ENCODE measurements at regions of chr18 and their contacts with region 1.

Region 1: GRCh38 chr18:28189400-28190239 is 12.7 kb upstream of the CDH2 start:
- DNase-seq: peak; percentile 54
- ATAC-seq: peak; percentile 86
- H3K4me3 ChIP-seq: no peak overlapping the region
- H3K27ac ChIP-seq: no peak overlapping the region
- H3K4me1 ChIP-seq: peaks cover 23% of the 10 kb centered on the region
- H3K27me3 ChIP-seq: no peaks in the 10 kb centered on the region
- CTCF ChIP-seq: peak; percentile 82
- EP300 ChIP-seq: no peak
- POLR2A ChIP-seq: no peak
- RAD21 ChIP-seq: peak; percentile 61

Region 2: DNA sequence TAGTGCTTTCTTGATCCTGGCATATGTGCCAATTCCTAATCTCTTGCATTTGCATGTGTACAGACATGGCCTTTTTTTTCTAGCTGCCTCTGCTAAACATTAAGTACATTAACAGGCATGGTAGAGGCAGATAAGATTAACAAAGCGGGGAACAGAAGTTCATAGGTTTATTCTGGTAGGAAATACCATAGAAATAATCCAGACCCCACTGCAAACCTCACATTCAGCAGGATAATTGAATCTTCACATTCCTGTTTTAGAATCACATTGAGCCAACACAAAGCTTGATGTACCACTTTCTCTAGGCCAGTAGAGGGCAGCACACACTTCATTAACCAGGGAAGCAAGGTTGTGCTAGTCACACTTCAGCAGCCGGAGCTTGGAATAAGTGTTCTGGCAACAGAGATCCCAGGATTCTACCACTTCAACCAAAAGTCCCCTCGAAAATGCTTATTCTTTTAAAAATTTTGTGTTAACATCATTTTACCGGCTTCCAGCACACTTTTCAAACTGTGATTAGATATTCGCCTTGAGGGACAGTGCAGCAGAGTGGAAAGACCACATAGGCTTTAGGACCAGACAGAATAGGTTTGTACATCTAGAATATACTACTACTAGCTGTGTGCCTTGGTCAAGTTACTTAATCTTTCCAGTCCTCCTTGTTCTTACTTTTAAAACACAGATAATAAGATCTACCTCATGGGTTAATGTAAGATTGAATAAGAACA is 584.3 kb before region 1 on chr18:
- CTCF ChIA-PET with region 1: interaction called, 3 read pairs
- POLR2A ChIA-PET with region 1: no interaction called
- in situ Hi-C with region 1: loop called (anchors 25 kb)
- intact Hi-C with region 1: loop called (anchors 2 kb)
- DNase-seq: peak; percentile 53
- ATAC-seq: peak; percentile 92
- H3K4me3 ChIP-seq: no peak overlapping the region
- H3K27ac ChIP-seq: no peak overlapping the region
- H3K4me1 ChIP-seq: no peaks in the 10 kb centered on the region
- H3K27me3 ChIP-seq: no peaks in the 10 kb centered on the region
- CTCF ChIP-seq: peak; percentile 85
- EP300 ChIP-seq: no peak
- POLR2A ChIP-seq: no peak
- RAD21 ChIP-seq: 0 out of 2 replicates have a peak, but pooled peaks have one; percentile 21

Region 3: DNA sequence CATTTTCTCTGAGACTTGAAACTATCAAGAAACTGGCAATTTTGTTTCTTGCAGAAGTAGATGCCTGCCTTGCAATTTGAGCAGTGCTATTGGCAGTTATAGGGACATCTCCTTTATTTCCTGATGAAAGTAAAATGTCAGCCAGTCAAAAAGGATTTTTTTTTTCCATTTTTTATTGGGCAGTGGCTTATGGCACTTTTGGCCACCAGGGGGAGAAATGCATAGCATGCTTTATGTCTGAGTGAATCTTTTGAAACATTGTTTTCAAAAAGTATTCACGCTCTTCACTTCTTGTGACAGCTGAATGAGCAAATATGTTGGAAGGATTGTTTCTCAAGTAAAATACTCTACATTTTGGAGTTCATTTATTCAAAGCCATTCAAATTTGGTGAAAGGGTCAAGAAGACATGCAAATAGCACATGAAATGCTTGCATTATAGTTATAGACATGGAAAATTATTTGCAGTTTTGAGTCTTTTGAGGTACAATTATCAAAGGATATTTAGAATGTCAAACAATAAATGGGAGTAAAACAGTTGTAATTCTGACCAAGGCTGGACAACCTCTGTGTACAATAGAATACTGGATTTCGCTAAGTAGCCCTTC is 503.7 kb before region 1 on chr18:
- CTCF ChIA-PET with region 1: interaction called, 15 read pairs
- POLR2A ChIA-PET with region 1: no interaction called
- in situ Hi-C with region 1: loop called (anchors 25 kb)
- intact Hi-C with region 1: loop called (anchors 1 kb)
- DNase-seq: peak; percentile 14
- ATAC-seq: no peak
- H3K4me3 ChIP-seq: no peak overlapping the region
- H3K27ac ChIP-seq: no peak overlapping the region
- H3K4me1 ChIP-seq: no peaks in the 10 kb centered on the region
- H3K27me3 ChIP-seq: no peaks in the 10 kb centered on the region
- CTCF ChIP-seq: peak; percentile 51
- EP300 ChIP-seq: no peak
- POLR2A ChIP-seq: no peak
- RAD21 ChIP-seq: no peak

Region 4: DNA sequence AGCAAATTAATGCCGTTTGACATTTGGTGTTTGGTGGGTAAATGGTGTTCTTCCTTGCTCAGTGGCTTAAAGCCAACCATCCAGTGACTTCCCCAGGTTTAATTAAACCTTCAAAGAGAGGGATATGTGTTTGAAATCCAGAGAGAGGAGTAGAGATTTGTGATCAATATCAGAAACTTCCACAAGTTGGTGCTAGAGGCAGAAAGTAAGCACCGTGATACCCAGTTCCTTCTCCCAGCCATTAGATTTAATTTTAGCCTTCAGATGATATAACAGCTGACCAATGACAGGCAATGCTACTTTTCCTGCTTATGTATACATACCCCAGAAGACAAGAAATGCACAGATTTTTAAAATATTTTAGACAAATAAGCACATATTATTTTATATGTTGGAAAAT is 411.2 kb before region 1 on chr18:
- CTCF ChIA-PET with region 1: no interaction called
- POLR2A ChIA-PET with region 1: no interaction called
- in situ Hi-C with region 1: loop called (anchors 25 kb)
- intact Hi-C with region 1: loop called (anchors 1 kb)
- DNase-seq: no peak
- ATAC-seq: no peak
- H3K4me3 ChIP-seq: no peak overlapping the region
- H3K27ac ChIP-seq: no peak overlapping the region
- H3K4me1 ChIP-seq: no peaks in the 10 kb centered on the region
- H3K27me3 ChIP-seq: no peaks in the 10 kb centered on the region; a peak in 1 of 5 replicates
- CTCF ChIP-seq: 0 out of 2 replicates have a peak, but pooled peaks have one; percentile 17
- EP300 ChIP-seq: no peak
- POLR2A ChIP-seq: no peak
- RAD21 ChIP-seq: no peak

Region 5: GRCh38 chr18:28003451-28003850 is 186.2 kb before region 1 on chr18:
- CTCF ChIA-PET with region 1: no interaction called
- POLR2A ChIA-PET with region 1: no interaction called
- in situ Hi-C with region 1: loop called (anchors 10 kb)
- intact Hi-C with region 1: no loop called
- DNase-seq: no peak
- ATAC-seq: no peak
- H3K4me3 ChIP-seq: no peak overlapping the region
- H3K27ac ChIP-seq: no peak overlapping the region
- H3K4me1 ChIP-seq: no peaks in the 10 kb centered on the region
- H3K27me3 ChIP-seq: no peaks in the 10 kb centered on the region
- CTCF ChIP-seq: no peak
- EP300 ChIP-seq: no peak
- POLR2A ChIP-seq: no peak
- RAD21 ChIP-seq: no peak

Region 6: GRCh38 chr18:28013066-28013465 is 176.6 kb before region 1 on chr18:
- CTCF ChIA-PET with region 1: interaction called, 12 read pairs
- POLR2A ChIA-PET with region 1: no interaction called
- in situ Hi-C with region 1: loop called (anchors 10 kb)
- intact Hi-C with region 1: loop called (anchors 1 kb)
- DNase-seq: peak; percentile 13
- ATAC-seq: no peak
- H3K4me3 ChIP-seq: no peak overlapping the region
- H3K27ac ChIP-seq: no peak overlapping the region
- H3K4me1 ChIP-seq: peaks cover 8% of the 10 kb centered on the region; the same call in 1 of the 2 replicates
- H3K27me3 ChIP-seq: no peaks in the 10 kb centered on the region
- CTCF ChIP-seq: no peak; the same call in 1 of the 2 replicates
- EP300 ChIP-seq: no peak
- POLR2A ChIP-seq: no peak
- RAD21 ChIP-seq: no peak

Region 7: GRCh38 chr18:28086670-28087552 is 102.7 kb before region 1 on chr18:
- CTCF ChIA-PET with region 1: no interaction called
- POLR2A ChIA-PET with region 1: no interaction called
- in situ Hi-C with region 1: no loop called
- intact Hi-C with region 1: no loop called
- DNase-seq: peak; percentile 72
- ATAC-seq: peak; percentile 92
- H3K4me3 ChIP-seq: no peak overlapping the region
- H3K27ac ChIP-seq: peak overlapping the region; percentile 49
- H3K4me1 ChIP-seq: peaks cover 57% of the 10 kb centered on the region
- H3K27me3 ChIP-seq: no peaks in the 10 kb centered on the region
- CTCF ChIP-seq: no peak
- EP300 ChIP-seq: no peak
- POLR2A ChIP-seq: no peak
- RAD21 ChIP-seq: no peak

Region 8: DNA sequence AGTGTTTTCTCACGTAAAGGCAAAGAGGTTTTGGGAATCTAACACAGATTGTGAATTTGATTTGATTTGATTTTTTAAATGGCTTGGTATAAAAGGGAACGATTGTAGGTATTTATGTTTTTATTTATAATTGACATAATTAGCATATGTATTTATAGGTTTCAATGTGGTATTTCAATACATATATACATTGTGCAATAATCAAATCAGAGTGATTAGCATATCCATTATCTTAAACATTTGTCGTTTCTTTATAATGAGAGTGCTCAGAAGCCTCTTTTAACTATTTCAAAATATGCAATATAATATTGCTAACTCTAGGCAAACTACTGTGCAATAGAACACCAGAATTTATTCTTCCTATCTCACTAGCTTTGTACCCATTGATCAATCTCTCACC is 22.4 kb after region 1 on chr18:
- CTCF ChIA-PET with region 1: no interaction called
- POLR2A ChIA-PET with region 1: no interaction called
- in situ Hi-C with region 1: no loop called
- intact Hi-C with region 1: loop called (anchors 2 kb)
- DNase-seq: no peak
- ATAC-seq: no peak
- H3K4me3 ChIP-seq: no peak overlapping the region
- H3K27ac ChIP-seq: no peak overlapping the region
- H3K4me1 ChIP-seq: no peaks in the 10 kb centered on the region
- H3K27me3 ChIP-seq: no peaks in the 10 kb centered on the region
- CTCF ChIP-seq: no peak
- EP300 ChIP-seq: no peak
- POLR2A ChIP-seq: no peak
- RAD21 ChIP-seq: no peak